HCT116 (cell line): ENCODE measurements at regions of chr5 and their contacts with region 1.

Region 1: DNA sequence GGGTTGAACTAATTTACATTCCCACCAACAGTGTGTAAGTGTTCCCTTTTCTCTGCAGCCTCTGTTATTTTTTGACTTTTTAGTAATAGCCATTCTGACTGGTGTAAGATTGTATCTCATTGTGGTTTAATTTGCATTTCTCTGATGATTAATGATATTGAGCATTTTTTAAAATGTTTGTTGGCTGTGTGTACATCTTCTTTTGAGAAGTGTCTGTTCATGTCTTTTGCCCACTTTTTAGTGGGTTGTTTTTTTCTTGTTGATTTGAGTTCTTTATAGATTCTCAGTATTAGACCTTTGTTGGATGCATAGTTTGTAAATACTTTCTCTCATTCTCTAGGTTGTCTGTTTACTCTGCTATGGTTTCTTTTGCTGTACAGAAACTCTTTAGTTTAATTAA is 101.6 kb downstream of the NIPBL start:
- DNase-seq: no peak
- ATAC-seq: no peak
- H3K4me3 ChIP-seq: no peak overlapping the region
- H3K27ac ChIP-seq: no peak overlapping the region
- H3K4me1 ChIP-seq: no peaks in the 10 kb centered on the region
- H3K27me3 ChIP-seq: no peaks in the 10 kb centered on the region
- CTCF ChIP-seq: no peak
- POLR2A ChIP-seq: no peak
- RAD21 ChIP-seq: no peak

Region 2: DNA sequence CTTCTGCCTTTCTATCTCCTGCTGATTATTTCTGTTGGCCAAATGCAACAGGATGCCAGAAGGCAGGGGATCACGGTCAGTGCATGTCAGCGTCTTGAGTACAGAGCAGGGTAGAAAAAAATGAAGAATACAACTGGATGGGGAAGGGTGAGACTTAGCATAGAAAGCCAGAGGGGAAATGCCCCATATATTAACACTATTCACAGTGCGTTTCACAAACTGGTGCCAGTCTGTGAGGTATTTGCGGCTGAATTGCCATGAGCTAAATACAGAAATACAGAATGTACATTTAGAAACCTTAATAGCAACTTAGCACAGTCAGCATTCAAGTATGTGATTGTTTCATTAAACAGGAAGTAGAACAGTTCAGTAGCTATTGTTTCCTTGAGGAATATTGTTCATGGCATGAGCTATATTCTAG is 402.8 kb before region 1 on chr5:
- CTCF ChIA-PET with region 1: no interaction called
- POLR2A ChIA-PET with region 1: no interaction called
- RAD21 ChIA-PET with region 1: no interaction called
- intact Hi-C with region 1: no loop called
- DNase-seq: no peak
- ATAC-seq: no peak
- H3K4me3 ChIP-seq: no peak overlapping the region
- H3K27ac ChIP-seq: no peak overlapping the region
- H3K4me1 ChIP-seq: peaks cover 0 to 7% of the 10 kb centered on the region in 2 experiments; a peak in 3 of 4 replicates
- H3K27me3 ChIP-seq: no peaks in the 10 kb centered on the region
- CTCF ChIP-seq: no peak
- POLR2A ChIP-seq: no peak
- RAD21 ChIP-seq: no peak

Region 3: DNA sequence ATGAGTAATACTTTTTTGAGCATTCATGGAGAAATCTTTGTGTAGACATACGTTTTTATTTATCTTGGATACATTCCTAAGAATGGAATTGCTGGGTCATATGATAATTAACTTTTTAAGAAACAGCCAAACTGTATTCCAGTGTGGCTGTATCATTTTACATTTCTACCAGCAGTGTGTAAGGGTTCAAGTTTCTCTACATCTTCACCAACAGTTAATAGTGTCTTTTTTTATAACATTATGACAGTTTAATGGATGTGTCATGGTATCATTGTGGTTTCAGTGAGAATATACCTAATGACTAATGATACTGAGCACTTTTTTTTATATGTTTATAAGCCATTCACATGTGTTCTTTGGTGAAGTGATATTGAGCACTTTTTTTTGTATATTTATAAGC is 49.2 kb before region 1 on chr5:
- CTCF ChIA-PET with region 1: no interaction called
- POLR2A ChIA-PET with region 1: no interaction called
- RAD21 ChIA-PET with region 1: no interaction called
- intact Hi-C with region 1: loop called (anchors 5 kb)
- DNase-seq: no peak
- ATAC-seq: no peak
- H3K4me3 ChIP-seq: no peak overlapping the region
- H3K27ac ChIP-seq: no peak overlapping the region
- H3K4me1 ChIP-seq: peaks cover 2 to 11% of the 10 kb centered on the region in 2 experiments; a peak in 3 of 4 replicates
- H3K27me3 ChIP-seq: no peaks in the 10 kb centered on the region
- CTCF ChIP-seq: no peak
- POLR2A ChIP-seq: no peak
- RAD21 ChIP-seq: no peak